A549 (cell line): ENCODE measurements at regions of chr5 and their contacts with region 1.

Region 1: DNA sequence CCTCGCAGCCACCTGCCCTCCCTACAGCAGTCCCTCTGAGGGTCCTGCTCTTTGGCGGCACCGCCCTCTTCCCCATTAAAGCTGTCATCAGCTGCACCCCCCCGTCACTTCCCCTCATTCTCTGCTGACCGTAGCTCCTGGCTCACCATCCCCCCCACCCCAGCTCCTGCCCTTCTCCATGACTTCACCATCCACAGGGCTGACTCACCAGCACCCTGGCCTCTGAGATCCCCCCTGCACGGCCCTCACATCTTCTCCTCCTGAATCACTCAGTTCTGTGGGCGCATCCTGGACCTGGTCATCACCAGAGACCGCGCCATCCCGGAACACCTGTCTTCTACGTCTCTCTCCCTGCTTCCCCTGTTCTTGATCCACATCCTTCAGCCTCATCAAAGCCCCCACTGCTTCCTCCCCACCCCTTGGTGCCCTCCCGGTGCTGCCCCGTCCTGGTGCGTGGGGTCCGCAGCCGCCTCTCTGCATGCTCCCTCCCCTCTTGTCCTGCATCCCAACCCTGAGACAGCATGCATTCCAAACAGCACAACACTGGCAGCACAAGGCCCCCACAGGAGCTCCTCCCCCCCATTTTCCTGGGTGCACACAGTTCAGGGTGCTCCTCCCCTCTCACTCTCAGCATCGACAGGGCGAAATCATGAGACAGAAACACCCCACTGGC is 12.9 kb downstream of the FLT4 start:
- DNase-seq: no peak
- ATAC-seq: peak in 1 of 2 experiments; percentile 35; a peak in 2 of 6 replicates
- H3K4me3 ChIP-seq: no peak overlapping the region
- H3K27ac ChIP-seq: no peak overlapping the region
- H3K4me1 ChIP-seq: no peaks in the 10 kb centered on the region
- CTCF ChIP-seq: no peak
- EP300 ChIP-seq: no peak
- POLR2A ChIP-seq: no peak
- RAD21 ChIP-seq: no peak

Region 2: DNA sequence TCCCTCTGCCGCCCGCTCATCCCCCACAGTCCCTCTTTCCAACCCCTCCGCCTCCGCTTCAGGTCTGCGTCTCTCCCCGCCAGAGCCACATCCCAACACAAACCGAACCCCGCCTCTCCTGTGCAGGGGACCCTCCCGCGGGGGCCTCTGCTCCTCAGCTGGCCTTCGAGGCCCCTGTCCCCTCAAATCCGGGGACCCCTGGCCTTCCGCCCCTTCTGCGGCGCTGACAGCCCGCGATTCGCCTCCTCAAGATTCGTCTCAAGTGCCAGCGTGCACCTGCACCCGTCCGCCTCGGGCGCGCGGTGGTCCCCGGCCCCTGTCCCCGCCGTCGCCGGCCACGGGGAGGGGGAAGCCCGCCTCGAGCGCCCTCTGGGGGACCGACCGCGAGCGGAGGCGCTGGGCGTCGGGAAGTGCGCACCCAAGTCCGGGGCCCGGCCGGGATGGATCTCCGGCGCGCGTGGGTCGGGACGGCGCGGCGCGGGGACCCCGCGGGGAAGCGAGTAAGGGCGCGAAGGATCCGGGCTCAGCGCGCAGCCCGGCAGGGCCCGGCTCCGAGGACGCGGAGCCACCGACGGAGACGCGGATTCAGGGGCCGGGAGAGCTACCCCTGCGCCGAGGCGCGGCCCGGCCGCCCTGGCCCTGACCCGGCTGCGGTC is 12.2 kb after region 1 on chr5:
- CTCF ChIA-PET with region 1: interaction called, 11 read pairs
- POLR2A ChIA-PET with region 1: no interaction called
- DNase-seq: peak; percentile 33 to 73
- ATAC-seq: peak; percentile 60 to 81
- H3K4me3 ChIP-seq: peak overlapping the region; percentile 76
- H3K27ac ChIP-seq: peak overlapping the region; percentile 47 to 78; a peak in 5 of 6 replicates
- H3K4me1 ChIP-seq: no peaks in the 10 kb centered on the region
- CTCF ChIP-seq: peak; percentile 56
- EP300 ChIP-seq: no peak
- POLR2A ChIP-seq: no peak
- RAD21 ChIP-seq: peak; percentile 4 to 19; a peak in 1 of 5 replicates

Region 3: GRCh38 chr5:180755601-180756000 is 119.1 kb after region 1 on chr5:
- CTCF ChIA-PET with region 1: no interaction called
- POLR2A ChIA-PET with region 1: no interaction called
- DNase-seq: no peak
- ATAC-seq: no peak
- H3K4me3 ChIP-seq: no peak overlapping the region
- H3K27ac ChIP-seq: no peak overlapping the region
- H3K4me1 ChIP-seq: no peaks in the 10 kb centered on the region
- CTCF ChIP-seq: no peak
- EP300 ChIP-seq: no peak
- POLR2A ChIP-seq: no peak
- RAD21 ChIP-seq: no peak